ENCODE measurements at regions of chr22 and their contacts with region 1.

Region 1: DNA sequence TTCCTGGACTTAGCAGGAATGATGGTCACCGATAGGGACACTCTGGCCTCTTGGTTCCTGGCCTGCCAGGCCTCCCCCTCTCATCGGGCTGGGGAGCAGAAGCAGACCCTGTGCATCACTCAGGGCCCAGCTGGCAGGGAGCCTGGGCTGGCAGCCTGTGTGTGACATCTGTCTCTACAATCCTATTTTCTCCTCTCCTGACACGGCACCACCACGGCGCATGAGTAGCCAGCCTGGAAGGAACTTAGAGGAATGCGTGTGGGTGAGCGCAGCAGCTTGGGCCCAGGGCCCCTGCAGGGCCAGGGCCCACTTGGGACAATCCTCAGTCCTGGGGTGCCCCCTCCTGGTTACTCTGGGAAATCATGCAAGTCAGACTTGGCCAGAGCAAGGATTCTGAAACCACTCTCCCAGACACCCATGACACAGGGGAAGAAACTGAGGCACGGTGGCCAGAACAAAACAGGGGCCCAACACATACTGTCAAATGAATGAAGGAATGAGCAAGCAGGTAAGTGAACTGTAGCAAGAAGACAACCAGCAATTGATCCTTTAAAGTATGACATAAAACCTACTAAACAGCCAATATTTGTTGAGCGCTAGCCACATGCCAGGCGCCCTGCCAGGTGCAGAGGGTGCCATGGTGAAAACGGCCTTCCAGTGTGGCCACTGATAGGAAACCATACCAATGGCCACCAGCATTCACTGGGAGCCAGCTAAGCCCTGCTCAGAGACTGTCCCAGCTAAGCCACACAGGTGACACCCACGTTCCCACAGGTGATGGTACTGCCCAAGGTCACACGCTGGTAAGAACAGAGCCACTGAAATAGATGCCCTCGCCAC is 13.3 kb downstream of the RSPH14 start:
- H3K4me3 ChIP-seq: no peak overlapping the region
- H3K27ac ChIP-seq: no peak overlapping the region
- H3K4me1 ChIP-seq: no peaks in the 10 kb centered on the region
- CTCF ChIP-seq: peak; percentile 82

Region 2: GRCh38 chr22:22968366-22968765 is 160.1 kb before region 1 on chr22:
- CTCF ChIA-PET with region 1: interaction called, 11 read pairs
- POLR2A ChIA-PET with region 1: no interaction called
- H3K4me3 ChIP-seq: no peak overlapping the region
- H3K27ac ChIP-seq: no peak overlapping the region
- H3K4me1 ChIP-seq: no peaks in the 10 kb centered on the region
- CTCF ChIP-seq: no peak

Region 3: DNA sequence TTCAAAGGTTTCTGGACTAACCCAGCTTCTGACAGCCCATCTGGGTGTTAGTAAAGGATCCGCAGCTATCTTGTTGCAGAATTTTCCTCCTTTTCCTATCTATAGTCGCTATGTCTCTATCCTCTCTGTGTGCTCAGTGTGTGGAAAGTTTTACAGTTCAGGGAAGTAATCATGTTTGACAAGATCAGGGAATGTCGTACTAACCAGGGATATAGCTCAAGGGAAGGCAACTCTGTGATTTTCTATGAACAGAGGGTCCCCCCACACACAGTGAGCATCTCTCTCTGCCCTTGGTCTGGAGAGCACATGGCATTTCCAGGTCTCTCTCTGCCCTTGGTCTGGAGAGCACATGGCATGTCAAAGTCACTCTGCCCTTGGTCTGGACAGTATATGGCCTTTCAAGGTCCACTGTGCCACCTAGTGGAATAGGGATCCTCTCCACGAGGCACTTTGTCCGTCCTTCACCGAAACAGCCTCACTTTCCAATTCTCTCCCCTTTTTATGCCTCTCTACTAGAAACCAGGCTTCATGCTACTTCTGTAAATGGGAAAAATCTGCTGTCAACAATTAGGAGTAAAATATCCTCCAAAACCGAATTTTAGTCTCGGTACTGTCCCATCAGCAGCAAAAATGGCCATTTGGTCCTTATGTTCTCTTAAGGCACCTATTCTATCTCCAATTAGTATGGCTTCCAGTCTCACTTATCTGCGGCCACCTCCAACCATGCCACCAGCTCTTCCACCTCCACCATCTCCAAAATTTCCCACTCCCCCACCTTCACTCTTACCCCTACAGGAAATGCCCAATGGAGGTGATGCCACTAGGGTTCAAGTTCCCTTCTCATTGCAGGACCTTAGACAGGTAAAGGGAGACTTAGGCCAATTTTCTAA is 152.2 kb before region 1 on chr22:
- CTCF ChIA-PET with region 1: interaction called, 10 read pairs
- POLR2A ChIA-PET with region 1: no interaction called
- H3K4me3 ChIP-seq: no peak overlapping the region
- H3K27ac ChIP-seq: no peak overlapping the region
- H3K4me1 ChIP-seq: no peaks in the 10 kb centered on the region
- CTCF ChIP-seq: no peak

Region 4: DNA sequence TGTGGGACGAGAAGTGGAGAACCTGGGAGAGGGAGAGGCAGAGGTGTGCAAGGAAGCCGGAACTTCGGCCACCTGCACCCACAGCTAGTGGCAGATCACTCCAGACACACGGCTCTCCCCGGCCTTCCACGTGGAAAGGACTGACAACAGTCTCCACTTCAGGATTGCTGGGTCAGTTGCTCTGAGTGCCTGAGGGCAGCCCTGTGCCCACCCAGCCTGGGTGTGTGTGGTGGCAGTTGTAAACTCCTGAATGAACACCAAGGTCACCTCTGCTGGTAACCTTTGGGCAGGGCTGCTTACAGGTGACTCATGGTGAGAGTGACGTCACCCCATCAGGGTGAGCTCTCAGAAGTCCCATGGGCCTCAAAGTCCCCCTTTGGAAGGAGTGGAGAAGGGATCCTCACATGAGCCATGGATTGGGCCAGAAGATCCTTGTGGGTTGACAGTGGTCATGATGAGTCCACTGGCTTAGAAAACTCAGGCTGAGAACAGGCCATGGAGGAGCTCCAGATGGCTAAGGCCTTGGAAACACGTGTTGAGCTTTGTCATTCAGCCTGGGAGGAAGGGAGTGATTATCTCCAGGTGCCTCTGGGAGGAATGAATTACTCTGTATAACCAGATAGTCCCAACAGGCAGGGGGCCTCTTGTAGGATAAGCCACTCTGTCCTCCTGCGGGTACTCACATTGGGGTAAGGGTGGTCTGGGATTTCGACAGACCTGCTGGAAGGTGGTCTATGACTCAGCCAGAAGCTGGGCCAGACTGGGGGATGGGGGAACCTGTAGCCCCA is 123.2 kb after region 1 on chr22:
- CTCF ChIA-PET with region 1: no interaction called
- POLR2A ChIA-PET with region 1: no interaction called
- H3K4me3 ChIP-seq: no peak overlapping the region
- H3K27ac ChIP-seq: no peak overlapping the region
- H3K4me1 ChIP-seq: no peaks in the 10 kb centered on the region
- CTCF ChIP-seq: no peak